ENCODE measurements at regions of chr5 and their contacts with region 1.

Region 1: DNA sequence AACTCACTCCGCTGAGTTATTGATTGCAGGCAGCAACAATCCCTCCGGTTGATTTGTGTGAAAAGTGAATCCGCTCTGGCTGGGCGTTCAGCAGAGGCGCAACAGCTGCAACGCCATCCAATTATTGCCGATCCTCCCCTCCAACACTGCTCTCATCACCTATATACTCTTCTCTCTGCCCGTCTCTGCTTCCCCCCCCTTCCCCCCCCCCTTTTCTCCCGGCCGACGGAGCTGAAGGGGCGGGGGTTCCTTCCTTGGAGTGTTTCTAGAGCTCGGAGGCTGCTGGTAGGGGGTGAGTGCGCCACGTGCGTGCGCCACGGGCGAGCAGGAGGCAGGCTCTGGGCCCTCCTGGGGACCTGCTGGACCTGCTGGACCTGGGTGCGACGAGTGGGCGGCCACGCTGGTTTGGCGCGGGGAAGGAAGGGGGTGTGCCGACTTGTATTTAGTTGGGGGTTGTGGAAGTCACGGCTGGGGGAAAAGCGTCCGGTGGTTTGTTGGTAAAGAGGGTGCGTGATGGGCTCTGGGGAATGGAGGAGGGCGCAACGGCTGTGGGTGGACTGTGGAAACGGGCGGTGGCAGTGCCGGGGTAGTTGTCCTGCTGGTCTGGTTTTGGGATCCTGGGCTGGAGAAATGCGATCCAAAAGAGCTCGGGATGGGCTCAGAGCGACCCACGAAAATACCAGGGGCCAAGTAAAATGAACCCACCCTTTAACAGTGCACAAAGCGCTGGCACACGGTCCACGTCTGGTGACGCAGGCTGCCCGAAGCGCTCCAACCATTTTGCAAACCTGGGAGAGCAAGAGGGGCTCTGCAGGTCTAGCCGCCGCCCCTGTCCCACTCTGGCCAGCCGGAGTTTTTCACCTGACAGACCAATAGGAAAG is 6.4 kb upstream of the MEF2C start:
- DNase-seq: peak; percentile 83 to 89
- ATAC-seq: peak; percentile 90
- H3K4me3 ChIP-seq: peak overlapping the region; percentile 46 to 78
- H3K27ac ChIP-seq: peak overlapping the region; percentile 86 to 89
- H3K4me1 ChIP-seq: peaks cover 0 to 1% of the 10 kb centered on the region in 2 donors
- H3K27me3 ChIP-seq: no peaks in the 10 kb centered on the region

Region 2: GRCh38 chr5:88769165-88769564 is 120.3 kb before region 1 on chr5:
- intact Hi-C with region 1: no loop called
- DNase-seq: peak in 1 of 2 donors; percentile 65
- ATAC-seq: peak; percentile 82
- H3K4me3 ChIP-seq: no peak overlapping the region
- H3K27ac ChIP-seq: peak overlapping the region in 1 of 2 donors; percentile 51
- H3K4me1 ChIP-seq: peaks cover 0 to 4% of the 10 kb centered on the region in 2 donors
- H3K27me3 ChIP-seq: no peaks in the 10 kb centered on the region

Region 3: DNA sequence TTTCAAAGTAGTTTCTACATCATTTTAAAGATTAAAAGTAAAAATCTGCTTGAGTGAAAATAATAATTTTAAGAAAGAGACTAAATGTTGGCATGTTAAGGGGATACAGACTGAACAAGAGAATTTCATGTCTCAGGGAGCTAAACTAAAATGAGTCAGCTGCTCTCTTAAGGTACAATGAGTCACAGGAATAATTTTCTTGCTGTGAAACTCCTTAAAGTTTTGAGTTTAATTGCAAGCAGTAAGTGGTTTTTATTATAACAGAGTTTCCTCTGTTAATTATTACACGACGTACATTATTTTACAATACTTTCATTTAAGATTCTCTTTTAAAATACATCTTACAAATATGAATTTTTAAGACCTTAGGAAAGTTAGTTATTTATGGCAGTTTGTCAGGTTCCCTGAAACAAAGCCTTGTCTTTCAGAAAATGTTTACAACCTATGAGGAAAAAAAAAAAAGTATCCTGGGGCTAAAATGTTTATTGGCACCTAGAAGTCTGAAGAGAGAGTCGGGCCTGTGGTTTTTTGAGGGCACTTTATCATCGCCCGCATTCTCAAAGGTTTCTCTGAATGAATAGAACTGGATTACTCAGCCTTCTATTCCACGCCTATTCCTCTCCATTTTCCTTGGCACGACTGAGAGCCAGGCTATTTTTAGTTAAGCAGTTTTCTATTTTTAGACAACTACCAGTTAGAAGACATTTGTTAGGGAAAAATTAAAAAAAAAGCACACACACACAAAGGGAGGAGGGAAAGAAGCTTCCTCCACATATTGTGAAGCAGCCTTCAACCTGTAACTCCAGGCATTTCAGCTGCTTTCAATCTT is 103.8 kb before region 1 on chr5:
- intact Hi-C with region 1: loop called (anchors 5 kb)
- DNase-seq: no peak
- ATAC-seq: peak; percentile 93
- H3K4me3 ChIP-seq: peak overlapping the region in 1 of 2 donors; percentile 33
- H3K27ac ChIP-seq: peak overlapping the region; percentile 54 to 96
- H3K4me1 ChIP-seq: peaks cover 0 to 2% of the 10 kb centered on the region in 2 donors
- H3K27me3 ChIP-seq: no peaks in the 10 kb centered on the region

Region 4: GRCh38 chr5:88964859-88965258 is 75.4 kb after region 1 on chr5:
- intact Hi-C with region 1: loop called in 1 of 2 experiments (anchors 5 kb)
- DNase-seq: no peak
- ATAC-seq: no peak
- H3K4me3 ChIP-seq: no peak overlapping the region
- H3K27ac ChIP-seq: no peak overlapping the region
- H3K4me1 ChIP-seq: peaks cover 0 to 5% of the 10 kb centered on the region in 2 donors
- H3K27me3 ChIP-seq: no peaks in the 10 kb centered on the region

Region 5: GRCh38 chr5:90264689-90265544 is 1375.5 kb after region 1 on chr5:
- intact Hi-C with region 1: loop called (anchors 5 to 10 kb)
- DNase-seq: peak; percentile 67 to 80
- ATAC-seq: peak; percentile 84
- H3K4me3 ChIP-seq: no peak overlapping the region
- H3K27ac ChIP-seq: no peak overlapping the region
- H3K4me1 ChIP-seq: peaks cover 0 to 2% of the 10 kb centered on the region in 2 donors
- H3K27me3 ChIP-seq: no peaks in the 10 kb centered on the region